ENCODE measurements at regions of chr1 and their contacts with region 1.

Region 1: GRCh38 chr1:92599184-92599583 is 112.5 kb upstream of the GFI1 start:
- DNase-seq: peak; percentile 51
- ATAC-seq: peak; percentile 60; the same call in 1 of the 2 replicates
- H3K4me3 ChIP-seq: no peak overlapping the region
- H3K27ac ChIP-seq: no peak overlapping the region
- H3K4me1 ChIP-seq: no peaks in the 10 kb centered on the region
- H3K27me3 ChIP-seq: no peaks in the 10 kb centered on the region
- CTCF ChIP-seq: peak; percentile 52
- POLR2A ChIP-seq: no peak
- RAD21 ChIP-seq: peak; percentile 57

Region 2: DNA sequence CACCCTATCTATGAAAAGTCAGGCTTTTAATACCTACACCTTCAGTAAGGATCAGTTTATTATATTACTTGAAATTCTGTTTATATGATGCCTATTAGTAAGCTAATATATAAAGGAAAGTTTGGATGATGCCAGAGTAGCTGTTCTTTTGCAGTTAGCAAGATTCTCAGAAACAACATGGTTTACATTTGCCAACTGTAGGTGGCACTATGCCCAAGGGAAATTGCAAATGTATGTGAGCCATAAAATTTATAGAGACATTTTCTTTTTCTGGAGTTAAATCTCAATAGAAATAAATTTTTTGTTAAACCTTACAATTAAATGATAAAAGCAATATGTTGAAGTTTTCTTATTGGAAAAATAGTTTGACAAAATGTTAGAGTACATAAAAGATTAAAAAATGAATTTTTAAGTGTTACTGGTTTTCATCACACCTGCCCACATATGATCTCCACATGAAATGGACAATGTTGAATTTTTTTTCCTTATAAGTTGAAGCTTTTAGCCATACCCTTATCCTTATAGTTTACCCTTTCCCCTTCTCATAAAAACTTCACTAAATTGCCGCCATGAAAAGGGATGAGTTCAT is 601.5 kb before region 1 on chr1:
- CTCF ChIA-PET with region 1: interaction called, 3 read pairs
- POLR2A ChIA-PET with region 1: no interaction called
- dilution Hi-C with region 1: no loop called
- in situ Hi-C with region 1: loop called (anchors 25 kb)
- intact Hi-C with region 1: loop called (anchors 10 kb)
- DNase-seq: peak; percentile 68
- ATAC-seq: no peak
- H3K4me3 ChIP-seq: no peak overlapping the region
- H3K27ac ChIP-seq: no peak overlapping the region
- H3K4me1 ChIP-seq: no peaks in the 10 kb centered on the region
- H3K27me3 ChIP-seq: no peaks in the 10 kb centered on the region
- CTCF ChIP-seq: peak; percentile 78
- POLR2A ChIP-seq: no peak
- RAD21 ChIP-seq: peak; percentile 87

Region 3: DNA sequence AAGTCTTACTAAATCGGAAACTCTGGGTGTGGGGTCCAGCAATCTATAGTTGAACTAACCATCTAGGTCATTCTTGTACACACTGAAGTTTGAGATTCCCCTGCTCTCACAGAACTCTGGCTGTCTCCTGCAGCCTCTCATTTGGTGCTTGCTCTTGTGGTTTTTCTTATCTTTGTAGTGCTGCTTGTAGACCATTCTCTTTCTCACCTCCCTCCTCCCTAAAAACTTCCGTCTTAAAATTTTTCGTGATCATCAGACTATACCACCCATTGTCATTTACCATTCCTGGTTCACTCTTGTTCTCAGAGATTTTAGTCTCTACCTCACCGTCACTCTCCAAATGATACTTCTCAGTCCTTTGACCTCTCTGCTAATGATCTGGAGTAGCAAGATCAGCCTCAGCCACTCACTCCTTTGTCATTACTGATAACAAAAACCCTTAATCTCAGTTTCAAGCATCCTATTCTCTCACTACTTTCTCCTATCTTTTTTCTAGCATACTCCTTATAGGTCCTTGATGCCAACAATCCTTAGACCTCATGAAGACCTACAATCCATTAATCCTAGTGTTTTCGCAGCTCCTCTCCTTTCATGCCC is 582.4 kb before region 1 on chr1:
- CTCF ChIA-PET with region 1: no interaction called
- POLR2A ChIA-PET with region 1: no interaction called
- dilution Hi-C with region 1: no loop called
- in situ Hi-C with region 1: loop called (anchors 25 kb)
- intact Hi-C with region 1: loop called (anchors 10 kb)
- DNase-seq: no peak
- ATAC-seq: no peak
- H3K4me3 ChIP-seq: no peak overlapping the region
- H3K27ac ChIP-seq: no peak overlapping the region
- H3K4me1 ChIP-seq: no peaks in the 10 kb centered on the region
- H3K27me3 ChIP-seq: no peaks in the 10 kb centered on the region
- CTCF ChIP-seq: no peak
- POLR2A ChIP-seq: no peak
- RAD21 ChIP-seq: no peak

Region 4: DNA sequence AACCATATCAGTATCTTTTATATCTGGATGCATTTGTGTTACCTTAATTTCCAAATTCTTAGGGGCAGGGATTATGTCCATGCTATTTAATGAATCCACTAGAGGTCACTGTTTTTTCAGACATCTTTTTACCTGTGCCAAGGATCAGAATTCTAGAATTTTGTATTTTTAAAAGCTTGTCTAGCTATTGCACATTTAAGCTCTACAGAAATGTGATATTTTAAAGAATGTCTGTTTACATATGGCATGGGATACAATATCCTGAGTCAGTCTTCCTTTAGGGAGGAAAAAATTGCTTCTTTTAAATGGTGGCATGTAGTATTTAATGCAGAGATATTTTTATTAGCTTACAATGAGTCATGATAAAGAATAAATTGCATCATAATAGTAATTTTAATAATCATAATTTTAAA is 289.0 kb before region 1 on chr1:
- CTCF ChIA-PET with region 1: no interaction called
- POLR2A ChIA-PET with region 1: no interaction called
- dilution Hi-C with region 1: no loop called
- in situ Hi-C with region 1: no loop called
- intact Hi-C with region 1: loop called (anchors 2 kb)
- DNase-seq: peak; percentile 50
- ATAC-seq: peak; percentile 66
- H3K4me3 ChIP-seq: no peak overlapping the region
- H3K27ac ChIP-seq: no peak overlapping the region
- H3K4me1 ChIP-seq: no peaks in the 10 kb centered on the region
- H3K27me3 ChIP-seq: no peaks in the 10 kb centered on the region
- CTCF ChIP-seq: peak; percentile 65
- POLR2A ChIP-seq: no peak
- RAD21 ChIP-seq: peak; percentile 64